PC-9 (cell line): ENCODE measurements at regions of chr12 and their contacts with region 1.

Region 1: GRCh38 chr12:53867216-53868001 is 71.2 kb upstream of the HOXC13 start:
- DNase-seq: peak; percentile 93
- H3K4me3 ChIP-seq: no peak overlapping the region
- H3K27ac ChIP-seq: peak overlapping the region; percentile 88
- H3K4me1 ChIP-seq: peaks cover 49% of the 10 kb centered on the region
- H3K27me3 ChIP-seq: no peaks in the 10 kb centered on the region
- CTCF ChIP-seq: no peak

Region 2: DNA sequence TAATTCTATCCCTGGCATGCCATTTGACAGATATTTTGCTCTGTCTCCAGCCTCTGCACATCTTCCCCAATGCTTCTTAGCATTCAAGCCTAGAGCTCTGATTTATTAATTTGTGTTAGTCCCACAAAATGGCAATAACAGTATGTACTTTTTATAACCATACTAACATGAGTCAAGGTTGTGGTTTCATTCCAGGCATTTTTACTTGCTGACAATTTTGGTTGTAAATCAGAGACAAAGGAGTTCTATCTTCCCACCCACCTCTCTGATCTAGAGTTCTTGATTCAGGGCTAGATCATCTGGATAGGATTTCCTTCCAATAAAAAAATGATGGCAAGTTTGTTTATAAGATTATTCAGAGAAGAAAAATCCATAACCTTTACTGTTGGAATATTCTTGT is 97.1 kb before region 1 on chr12:
- CTCF ChIA-PET with region 1: no interaction called
- POLR2A ChIA-PET with region 1: no interaction called
- intact Hi-C with region 1: loop called (anchors 1 kb)
- DNase-seq: peak in 1 of 2 experiments; percentile 92
- H3K4me3 ChIP-seq: no peak overlapping the region
- H3K27ac ChIP-seq: peak overlapping the region; percentile 53
- H3K4me1 ChIP-seq: peaks cover 39% of the 10 kb centered on the region
- H3K27me3 ChIP-seq: no peaks in the 10 kb centered on the region
- CTCF ChIP-seq: no peak

Region 3: GRCh38 chr12:53805127-53805466 is 62.3 kb before region 1 on chr12:
- CTCF ChIA-PET with region 1: no interaction called
- POLR2A ChIA-PET with region 1: no interaction called
- intact Hi-C with region 1: loop called (anchors 1 kb)
- DNase-seq: peak in 1 of 2 experiments; percentile 78
- H3K4me3 ChIP-seq: peak overlapping the region; percentile 32; the same call in 1 of the 2 replicates
- H3K27ac ChIP-seq: peak overlapping the region; percentile 96
- H3K4me1 ChIP-seq: peaks cover 74% of the 10 kb centered on the region
- H3K27me3 ChIP-seq: no peaks in the 10 kb centered on the region
- CTCF ChIP-seq: no peak

Region 4: GRCh38 chr12:53825246-53826081 is 41.9 kb before region 1 on chr12:
- CTCF ChIA-PET with region 1: no interaction called
- POLR2A ChIA-PET with region 1: interaction called, 3 read pairs
- intact Hi-C with region 1: loop called (anchors 1 kb)
- DNase-seq: peak; percentile 69 to 99
- H3K4me3 ChIP-seq: no peak overlapping the region
- H3K27ac ChIP-seq: peak overlapping the region; percentile 87
- H3K4me1 ChIP-seq: peaks cover 79% of the 10 kb centered on the region
- H3K27me3 ChIP-seq: no peaks in the 10 kb centered on the region
- CTCF ChIP-seq: no peak

Region 5: GRCh38 chr12:53952871-53953734 is 85.7 kb after region 1 on chr12:
- CTCF ChIA-PET with region 1: no interaction called
- POLR2A ChIA-PET with region 1: no interaction called
- intact Hi-C with region 1: loop called (anchors 5 kb)
- DNase-seq: peak; percentile 77 to 85
- H3K4me3 ChIP-seq: peak overlapping the region; percentile 54
- H3K27ac ChIP-seq: no peak overlapping the region
- H3K4me1 ChIP-seq: peaks cover 23% of the 10 kb centered on the region
- H3K27me3 ChIP-seq: no peaks in the 10 kb centered on the region
- CTCF ChIP-seq: no peak